Aorta (tissue), 5 donors: ENCODE measurements at regions of chr1 and their contacts with region 1.

Region 1: DNA sequence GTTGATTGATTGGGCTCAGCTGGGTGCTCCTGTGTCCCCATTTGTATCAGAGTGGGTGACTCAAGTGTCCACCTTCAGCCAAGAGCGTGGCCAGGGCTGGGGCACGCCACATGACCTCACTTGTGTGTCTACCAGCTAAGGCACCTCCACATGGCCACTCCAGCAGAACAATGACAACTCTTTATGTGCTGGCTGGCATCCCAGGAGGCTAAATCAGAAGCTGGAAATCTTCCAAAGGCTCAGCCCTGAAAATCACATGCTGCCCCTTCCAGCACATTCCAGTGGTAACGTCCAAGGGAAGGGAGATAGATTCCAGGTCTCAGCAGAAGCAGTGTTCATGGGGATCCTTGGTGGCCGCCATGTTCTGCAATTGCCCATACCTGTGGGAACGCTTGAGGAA is 585.5 kb downstream of the AJAP1 start:
- DNase-seq: no peak
- ATAC-seq: no peak
- H3K4me3 ChIP-seq: no peak overlapping the region
- H3K27ac ChIP-seq: no peak overlapping the region
- H3K4me1 ChIP-seq: no peaks in the 10 kb centered on the region
- H3K27me3 ChIP-seq: no peaks in the 10 kb centered on the region

Region 2: DNA sequence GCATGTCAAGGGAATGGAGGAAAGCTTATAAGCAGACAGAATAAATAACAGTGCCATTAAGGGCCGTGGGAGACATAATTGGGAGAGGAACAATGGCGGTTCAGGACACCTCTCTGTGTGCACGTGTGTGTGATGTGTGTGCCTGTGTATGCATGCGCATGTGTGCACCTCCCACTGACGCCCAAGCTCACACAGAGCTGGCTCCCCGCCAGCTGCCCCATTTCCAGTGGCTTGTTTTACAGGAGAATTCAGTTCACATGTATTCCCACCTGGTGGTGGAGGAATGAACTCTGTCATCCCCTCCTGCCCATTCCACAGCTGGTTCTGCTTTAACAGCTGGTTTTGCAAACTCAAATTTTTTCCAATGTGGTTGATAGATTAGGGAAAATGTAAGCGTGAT is 323.3 kb before region 1 on chr1:
- intact Hi-C with region 1: loop called in 1 of 2 experiments (anchors 5 kb)
- DNase-seq: no peak
- ATAC-seq: no peak
- H3K4me3 ChIP-seq: no peak overlapping the region
- H3K27ac ChIP-seq: no peak overlapping the region
- H3K4me1 ChIP-seq: no peaks in the 10 kb centered on the region
- H3K27me3 ChIP-seq: no peaks in the 10 kb centered on the region